ENCODE measurements at regions of chr18 and their contacts with region 1.

Region 1: GRCh38 chr18:24426398-24427294 is at the start of gene IMPACT:
- H3K4me3 ChIP-seq: peak within 1 kb of the TSS; percentile 82
- H3K27ac ChIP-seq: peak within 1 kb of the TSS; percentile 83
- H3K4me1 ChIP-seq: no peaks in the 10 kb centered on the region
- CTCF ChIP-seq: peak; percentile 21; the same call in 1 of the 2 replicates

Region 2: GRCh38 chr18:24397694-24398365 is 28.8 kb before region 1 on chr18 and contains the start of gene OSBPL1A:
- CTCF ChIA-PET with region 1: interaction called, 8 read pairs
- POLR2A ChIA-PET with region 1: interaction called, 16 read pairs
- H3K4me3 ChIP-seq: peak within 1 kb of the TSS; percentile 67
- H3K27ac ChIP-seq: peak within 1 kb of the TSS; percentile 91
- H3K4me1 ChIP-seq: peaks cover 12% of the 10 kb centered on the region
- CTCF ChIP-seq: peak; percentile 74

Region 3: DNA sequence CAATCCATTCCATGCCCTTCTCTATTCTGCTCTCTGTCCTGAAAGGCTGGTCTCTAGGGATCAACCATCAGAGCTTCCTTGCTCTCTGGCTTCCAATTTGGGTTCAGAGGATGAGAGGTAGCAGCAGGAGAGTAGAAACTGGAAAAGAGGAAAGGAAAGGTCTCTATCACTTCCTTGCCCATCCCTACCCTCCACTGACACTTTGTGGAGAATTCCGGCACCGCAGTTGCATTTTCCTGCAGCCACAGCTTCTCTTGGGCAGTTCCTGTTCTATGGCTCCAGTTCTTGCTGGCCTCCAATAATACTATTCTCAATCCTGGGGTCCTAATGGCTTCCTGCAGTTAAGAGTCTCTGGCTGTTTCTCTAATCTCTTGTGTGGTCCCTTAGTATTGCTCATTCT is 13.5 kb before region 1 on chr18:
- CTCF ChIA-PET with region 1: interaction called, 8 read pairs
- POLR2A ChIA-PET with region 1: interaction called, 11 read pairs
- H3K4me3 ChIP-seq: no peak overlapping the region
- H3K27ac ChIP-seq: no peak overlapping the region
- H3K4me1 ChIP-seq: no peaks in the 10 kb centered on the region
- CTCF ChIP-seq: peak; percentile 38; the same call in 1 of the 2 replicates

Region 4: GRCh38 chr18:24436939-24437338 is 10.3 kb after region 1 on chr18:
- CTCF ChIA-PET with region 1: interaction called, 3 read pairs
- POLR2A ChIA-PET with region 1: interaction called, 10 read pairs
- H3K4me3 ChIP-seq: no peak overlapping the region
- H3K27ac ChIP-seq: no peak overlapping the region
- H3K4me1 ChIP-seq: no peaks in the 10 kb centered on the region
- CTCF ChIP-seq: no peak

Region 5: GRCh38 chr18:24475926-24476589 is 49.4 kb after region 1 on chr18:
- CTCF ChIA-PET with region 1: no interaction called
- POLR2A ChIA-PET with region 1: no interaction called
- H3K4me3 ChIP-seq: no peak overlapping the region
- H3K27ac ChIP-seq: no peak overlapping the region
- H3K4me1 ChIP-seq: no peaks in the 10 kb centered on the region
- CTCF ChIP-seq: no peak

Measured in HEK293 (cell line).